ENCODE measurements at regions of chr1 and their contacts with region 1.

Region 1: DNA sequence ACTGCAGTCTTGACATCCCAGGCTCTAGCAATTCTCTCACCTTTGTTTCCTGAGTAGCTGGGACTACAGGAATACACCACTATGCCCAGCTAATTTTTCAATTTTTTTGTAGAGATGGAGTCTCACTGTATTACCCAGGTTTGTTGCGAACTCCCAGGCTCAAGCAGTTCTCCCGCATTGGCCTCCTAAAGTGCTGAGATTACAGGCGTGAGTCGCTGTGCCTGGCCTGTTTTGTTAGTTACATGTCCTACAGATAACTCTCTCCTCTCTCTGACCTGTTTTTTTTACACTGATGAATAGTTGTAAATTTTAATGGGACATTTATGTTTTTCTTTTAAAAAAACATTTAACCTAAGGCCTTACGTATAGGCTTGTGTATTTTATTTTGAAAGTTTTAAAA is 19.8 kb downstream of the PTBP2 start:
- DNase-seq: no peak
- ATAC-seq: no peak
- H3K4me3 ChIP-seq: no peak overlapping the region
- H3K4me3 Mint-ChIP-seq: no peak overlapping the region
- H3K27ac ChIP-seq: no peak overlapping the region
- H3K27ac Mint-ChIP-seq: no peak overlapping the region
- H3K4me1 ChIP-seq: peaks cover 3 to 4% of the 10 kb centered on the region in 2 experiments
- H3K4me1 Mint-ChIP-seq: peaks cover 43 to 58% (median 58%) of the 10 kb centered on the region in 3 donors
- H3K27me3 ChIP-seq: no peaks in the 10 kb centered on the region
- H3K27me3 Mint-ChIP-seq: no peaks in the 10 kb centered on the region

Region 2: DNA sequence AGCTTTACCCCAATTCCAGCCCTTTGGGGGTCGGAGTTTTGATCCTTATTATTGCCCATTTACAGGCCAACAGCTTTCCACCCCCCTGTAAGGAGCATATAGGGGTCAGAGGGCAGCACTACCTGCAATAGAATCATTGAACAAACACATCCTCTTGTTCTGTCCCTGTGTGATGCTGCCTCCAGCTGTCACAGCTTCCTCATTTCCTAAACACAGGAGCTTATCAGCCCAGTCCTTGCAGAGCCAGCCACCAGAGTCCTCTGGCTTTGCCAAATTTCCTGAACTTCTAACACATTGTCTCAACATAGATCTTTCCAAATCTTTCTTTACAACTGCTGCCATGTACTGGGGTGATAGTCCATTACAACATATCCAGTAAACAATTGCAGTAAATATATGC is 52.6 kb before region 1 on chr1:
- CTCF ChIA-PET with region 1: no interaction called
- POLR2A ChIA-PET with region 1: no interaction called
- DNase-seq: no peak
- ATAC-seq: no peak
- H3K4me3 ChIP-seq: no peak overlapping the region
- H3K4me3 Mint-ChIP-seq: no peak overlapping the region
- H3K27ac ChIP-seq: no peak overlapping the region
- H3K27ac Mint-ChIP-seq: no peak overlapping the region
- H3K4me1 ChIP-seq: no peaks in the 10 kb centered on the region
- H3K4me1 Mint-ChIP-seq: peaks cover 0 to 13% (median 0%) of the 10 kb centered on the region in 3 donors
- H3K27me3 ChIP-seq: peaks cover 0 to 2% of the 10 kb centered on the region in 2 experiments
- H3K27me3 Mint-ChIP-seq: no peaks in the 10 kb centered on the region

Region 3: GRCh38 chr1:96713649-96714048 is 27.7 kb before region 1 on chr1:
- CTCF ChIA-PET with region 1: no interaction called
- POLR2A ChIA-PET with region 1: interaction called, 7 to 10 read pairs
- DNase-seq: no peak
- ATAC-seq: no peak
- H3K4me3 ChIP-seq: no peak overlapping the region
- H3K4me3 Mint-ChIP-seq: no peak overlapping the region
- H3K27ac ChIP-seq: no peak overlapping the region
- H3K27ac Mint-ChIP-seq: no peak overlapping the region
- H3K4me1 ChIP-seq: no peaks in the 10 kb centered on the region
- H3K4me1 Mint-ChIP-seq: no peaks in the 10 kb centered on the region
- H3K27me3 ChIP-seq: no peaks in the 10 kb centered on the region
- H3K27me3 Mint-ChIP-seq: peaks cover 6 to 9% of the 10 kb centered on the region in 2 donors